ENCODE measurements at regions of chr15 and their contacts with region 1.

Region 1: DNA sequence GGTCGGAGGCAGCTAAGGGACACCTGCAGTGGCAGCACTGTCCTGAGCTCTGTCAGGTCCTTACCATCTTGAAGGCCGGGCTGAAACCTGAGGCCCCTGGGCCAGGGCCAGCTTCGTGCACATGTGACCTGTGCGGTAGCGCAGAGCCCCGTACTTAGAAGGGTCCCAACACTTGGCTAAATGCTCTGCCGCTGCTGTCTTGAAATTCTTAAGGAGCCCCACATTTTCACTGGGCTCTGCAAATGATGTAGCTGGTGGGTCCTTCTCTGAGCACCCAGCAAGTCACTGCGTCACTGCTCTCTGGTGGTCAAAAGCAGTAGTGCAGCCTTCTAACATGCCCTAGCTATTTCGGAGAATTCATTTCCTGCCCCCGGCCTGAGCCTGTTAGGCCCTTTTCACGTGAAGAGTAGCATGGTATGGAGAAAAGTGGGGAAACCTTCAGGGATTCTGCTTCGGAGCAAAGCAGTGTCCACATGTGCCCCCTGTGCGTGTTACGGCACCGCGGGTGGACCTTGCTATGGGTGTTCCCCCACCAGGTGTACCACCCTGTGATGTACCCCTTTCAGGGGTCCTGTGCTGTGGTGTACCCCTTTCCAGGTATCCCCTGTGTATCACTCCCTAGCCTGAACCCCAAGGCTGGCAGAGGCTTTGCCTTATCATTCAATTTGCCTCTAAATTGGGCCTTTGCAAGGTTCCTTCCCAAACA is 79.7 kb downstream of the TMEM266 start:
- DNase-seq: peak; percentile 82
- H3K4me3 Mint-ChIP-seq: no peak overlapping the region
- H3K27ac Mint-ChIP-seq: no peak overlapping the region
- H3K4me1 Mint-ChIP-seq: no peaks in the 10 kb centered on the region
- H3K27me3 Mint-ChIP-seq: peaks cover 79% of the 10 kb centered on the region
- CTCF ChIP-seq: peak; percentile 96

Region 2: DNA sequence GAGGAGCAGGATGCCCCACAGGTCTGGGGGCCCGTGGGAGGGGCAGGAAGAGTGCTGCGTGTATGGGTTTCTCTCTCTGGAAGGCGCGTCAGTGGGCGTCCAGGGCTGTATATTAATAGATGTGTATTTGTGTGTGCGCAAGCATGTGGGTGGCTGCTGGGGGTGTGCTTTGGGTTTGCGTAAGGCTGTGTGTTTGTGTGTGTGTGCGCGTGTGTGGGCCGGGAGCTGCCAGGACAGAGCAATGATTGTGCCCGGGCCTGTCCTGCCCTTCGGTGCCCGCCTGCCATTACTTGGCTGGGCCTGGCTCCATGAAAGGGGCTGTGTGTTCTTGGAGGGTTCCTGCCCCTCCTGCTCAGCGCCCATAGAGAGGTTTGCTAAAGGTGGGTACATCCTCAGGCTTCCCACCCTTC is 443.2 kb before region 1 on chr15:
- CTCF ChIA-PET with region 1: no interaction called
- intact Hi-C with region 1: no loop called
- DNase-seq: no peak
- H3K4me3 Mint-ChIP-seq: no peak overlapping the region
- H3K27ac Mint-ChIP-seq: no peak overlapping the region
- H3K4me1 Mint-ChIP-seq: peaks cover 17% of the 10 kb centered on the region
- H3K27me3 Mint-ChIP-seq: peaks cover 66% of the 10 kb centered on the region
- CTCF ChIP-seq: no peak

Region 3: DNA sequence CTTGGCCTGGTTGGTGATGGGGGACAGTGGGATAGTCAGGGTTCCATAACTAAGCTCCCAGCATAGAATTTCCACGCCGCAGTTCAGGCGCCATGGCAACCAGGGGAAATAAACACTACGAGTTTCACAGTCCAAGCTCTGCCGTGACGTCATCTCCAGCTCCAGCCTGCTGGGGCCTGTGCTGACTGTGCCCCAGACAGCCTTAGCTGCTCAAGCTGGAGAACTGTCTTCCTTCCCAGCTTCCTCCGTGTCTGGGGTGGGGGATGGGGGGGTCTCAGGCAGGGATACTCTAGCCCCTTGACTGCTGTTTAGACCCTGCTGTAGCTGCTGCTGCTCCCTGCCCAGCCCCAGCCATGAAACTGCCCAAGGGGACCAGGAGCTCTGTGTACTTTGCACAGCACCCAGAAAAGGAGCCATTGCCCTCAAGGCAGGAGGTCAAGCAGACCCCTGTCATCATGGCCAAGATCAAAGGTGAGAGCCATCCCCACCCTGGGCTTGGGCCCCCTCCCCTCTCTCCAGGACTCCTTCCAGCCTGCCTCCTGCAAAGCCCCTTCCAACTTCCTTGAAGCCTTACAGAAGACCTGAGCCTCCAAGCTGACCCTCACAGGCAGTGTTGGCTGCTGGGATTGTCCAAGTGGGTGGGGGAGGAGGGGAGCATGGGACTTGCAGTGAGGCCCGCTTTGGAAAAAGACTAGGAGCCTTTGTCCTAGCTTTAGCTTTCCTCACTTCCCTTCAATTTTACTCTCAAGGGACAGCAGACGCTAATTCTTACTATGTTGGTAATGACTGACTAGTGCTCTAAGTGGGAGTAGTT is 415.5 kb before region 1 on chr15:
- CTCF ChIA-PET with region 1: no interaction called
- intact Hi-C with region 1: loop called (anchors 5 kb)
- DNase-seq: peak; percentile 84
- H3K4me3 Mint-ChIP-seq: no peak overlapping the region
- H3K27ac Mint-ChIP-seq: peak overlapping the region; percentile 31
- H3K4me1 Mint-ChIP-seq: peaks cover 18% of the 10 kb centered on the region
- H3K27me3 Mint-ChIP-seq: peaks cover 36% of the 10 kb centered on the region
- CTCF ChIP-seq: no peak

Region 4: GRCh38 chr15:75809986-75810750 is 329.4 kb before region 1 on chr15:
- CTCF ChIA-PET with region 1: interaction called, 40 read pairs
- intact Hi-C with region 1: loop called (anchors 1 kb)
- DNase-seq: peak; percentile 60
- H3K4me3 Mint-ChIP-seq: no peak overlapping the region
- H3K27ac Mint-ChIP-seq: no peak overlapping the region
- H3K4me1 Mint-ChIP-seq: no peaks in the 10 kb centered on the region
- H3K27me3 Mint-ChIP-seq: peaks cover 51% of the 10 kb centered on the region
- CTCF ChIP-seq: peak; percentile 46

Region 5: DNA sequence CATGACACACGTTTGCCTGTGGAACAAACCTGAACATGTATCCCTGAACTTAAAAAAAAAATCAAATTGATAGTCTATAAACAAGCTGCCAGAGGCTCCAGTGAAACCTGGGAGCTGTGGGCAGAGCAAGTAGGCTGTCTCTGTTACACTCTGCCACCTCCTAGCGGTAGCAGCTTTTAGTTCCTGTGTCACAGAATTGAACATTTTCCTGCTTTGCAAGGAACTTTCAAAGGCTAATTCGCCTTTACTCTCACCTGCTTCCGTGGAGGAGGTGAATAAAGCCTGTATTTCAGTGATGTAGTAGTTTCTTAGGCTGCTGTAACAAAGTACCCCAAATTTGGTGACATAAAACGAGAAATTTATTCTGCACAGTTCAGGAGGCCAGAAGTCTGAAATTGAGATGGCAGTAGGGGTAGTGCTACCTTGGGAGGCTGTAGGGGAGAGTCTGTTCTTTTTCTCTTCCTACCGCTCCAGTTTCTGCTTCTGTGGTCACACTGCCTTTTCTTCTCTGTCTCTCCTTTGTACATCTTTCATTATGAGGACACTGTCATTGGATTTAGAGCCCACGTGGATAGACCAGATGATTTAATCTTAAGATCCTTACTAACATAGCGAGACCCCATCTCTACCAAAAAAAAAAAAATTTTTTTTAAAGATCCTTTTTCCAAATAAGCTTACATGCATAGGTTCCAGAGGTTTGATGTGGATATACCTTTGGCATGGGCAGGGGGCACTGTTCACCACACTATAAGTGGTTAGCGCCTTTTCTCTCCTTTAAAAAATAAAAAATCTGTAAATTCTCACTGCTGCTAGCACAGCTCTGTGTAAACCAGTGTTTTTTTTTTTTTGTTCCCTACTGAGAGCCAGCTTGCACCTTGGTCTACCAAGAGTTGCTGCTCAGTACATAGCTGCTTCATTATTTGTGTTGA is 210.6 kb before region 1 on chr15:
- CTCF ChIA-PET with region 1: interaction called, 12 read pairs
- intact Hi-C with region 1: loop called (anchors 2 kb)
- DNase-seq: no peak
- H3K4me3 Mint-ChIP-seq: no peak overlapping the region
- H3K27ac Mint-ChIP-seq: no peak overlapping the region
- H3K4me1 Mint-ChIP-seq: peaks cover 7% of the 10 kb centered on the region
- H3K27me3 Mint-ChIP-seq: no peaks in the 10 kb centered on the region
- CTCF ChIP-seq: no peak

Region 6: GRCh38 chr15:76057332-76058000 is 82.1 kb before region 1 on chr15:
- CTCF ChIA-PET with region 1: interaction called, 72 read pairs
- intact Hi-C with region 1: loop called (anchors 1 kb)
- DNase-seq: peak; percentile 57
- H3K4me3 Mint-ChIP-seq: no peak overlapping the region
- H3K27ac Mint-ChIP-seq: no peak overlapping the region
- H3K4me1 Mint-ChIP-seq: peaks cover 20% of the 10 kb centered on the region
- H3K27me3 Mint-ChIP-seq: peaks cover 43% of the 10 kb centered on the region
- CTCF ChIP-seq: peak; percentile 77

Region 7: GRCh38 chr15:76150971-76151598 is 11.6 kb after region 1 on chr15:
- CTCF ChIA-PET with region 1: interaction called, 12 read pairs
- intact Hi-C with region 1: no loop called
- DNase-seq: peak; percentile 89
- H3K4me3 Mint-ChIP-seq: no peak overlapping the region
- H3K27ac Mint-ChIP-seq: no peak overlapping the region
- H3K4me1 Mint-ChIP-seq: peaks cover 16% of the 10 kb centered on the region
- H3K27me3 Mint-ChIP-seq: peaks cover 55% of the 10 kb centered on the region
- CTCF ChIP-seq: peak; percentile 92